Posterior vena cava (tissue), 2 donors: ENCODE measurements at regions of chr22 and their contacts with region 1.

Region 1: GRCh38 chr22:46723882-46724281 is 14.2 kb downstream of the CERK start:
- DNase-seq: no peak

Region 2: GRCh38 chr22:46649141-46650077 is 74.5 kb before region 1 on chr22:
- intact Hi-C with region 1: no loop called
- DNase-seq: no peak

Region 3: GRCh38 chr22:46684706-46685105 is 39.2 kb before region 1 on chr22:
- intact Hi-C with region 1: loop called in 1 of 2 experiments (anchors 1 kb)
- DNase-seq: no peak